OCI-LY7 (cell line): ENCODE measurements at regions of chr2 and their contacts with region 1.

Region 1: GRCh38 chr2:1210352-1210751 is 202.9 kb upstream of the TPO start:
- DNase-seq: no peak
- H3K4me3 ChIP-seq: no peak overlapping the region
- H3K27ac ChIP-seq: no peak overlapping the region
- H3K4me1 ChIP-seq: no peaks in the 10 kb centered on the region
- CTCF ChIP-seq: no peak

Region 2: DNA sequence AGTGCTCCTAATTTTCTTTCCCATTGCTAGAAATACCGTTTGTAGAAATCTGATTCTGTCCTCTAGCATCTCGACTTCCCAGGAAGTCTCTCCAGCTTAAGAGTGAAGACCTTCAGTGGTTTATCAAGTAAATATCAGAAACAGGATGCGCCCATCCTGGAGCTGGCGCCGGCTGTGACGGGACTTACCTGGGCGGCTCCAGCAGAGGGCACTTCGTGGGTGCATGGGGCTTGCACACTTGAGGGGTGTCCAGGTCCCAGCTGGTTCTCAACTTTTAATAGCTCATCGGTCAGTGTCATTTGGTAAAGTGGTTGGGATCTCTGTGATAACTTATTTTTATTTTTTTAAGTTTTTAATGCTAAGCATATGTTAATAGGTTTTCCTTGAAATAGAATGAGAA is 35.9 kb after region 1 on chr2:
- CTCF ChIA-PET with region 1: no interaction called
- POLR2A ChIA-PET with region 1: no interaction called
- intact Hi-C with region 1: loop called (anchors 1 kb)
- DNase-seq: no peak
- H3K4me3 ChIP-seq: no peak overlapping the region
- H3K27ac ChIP-seq: no peak overlapping the region
- H3K4me1 ChIP-seq: no peaks in the 10 kb centered on the region
- CTCF ChIP-seq: 0 out of 2 replicates have a peak, but pooled peaks have one; percentile 27

Region 3: GRCh38 chr2:1348789-1349188 is 138.4 kb after region 1 on chr2:
- CTCF ChIA-PET with region 1: no interaction called
- POLR2A ChIA-PET with region 1: no interaction called
- intact Hi-C with region 1: no loop called
- DNase-seq: no peak
- H3K4me3 ChIP-seq: no peak overlapping the region
- H3K27ac ChIP-seq: no peak overlapping the region
- H3K4me1 ChIP-seq: no peaks in the 10 kb centered on the region
- CTCF ChIP-seq: no peak